ENCODE measurements at regions of chr12 and their contacts with region 1.

Region 1: GRCh38 chr12:12503384-12504078 is 59.1 kb downstream of the DUSP16 start:
- DNase-seq: peak; percentile 52
- ATAC-seq: peak; percentile 75
- H3K4me3 Mint-ChIP-seq: no peak overlapping the region
- H3K27ac Mint-ChIP-seq: peak overlapping the region; percentile 90; the same call in 1 of the 2 replicates
- H3K4me1 Mint-ChIP-seq: peaks cover 76% of the 10 kb centered on the region
- H3K27me3 Mint-ChIP-seq: no peaks in the 10 kb centered on the region
- CTCF ChIP-seq: no peak

Region 2: DNA sequence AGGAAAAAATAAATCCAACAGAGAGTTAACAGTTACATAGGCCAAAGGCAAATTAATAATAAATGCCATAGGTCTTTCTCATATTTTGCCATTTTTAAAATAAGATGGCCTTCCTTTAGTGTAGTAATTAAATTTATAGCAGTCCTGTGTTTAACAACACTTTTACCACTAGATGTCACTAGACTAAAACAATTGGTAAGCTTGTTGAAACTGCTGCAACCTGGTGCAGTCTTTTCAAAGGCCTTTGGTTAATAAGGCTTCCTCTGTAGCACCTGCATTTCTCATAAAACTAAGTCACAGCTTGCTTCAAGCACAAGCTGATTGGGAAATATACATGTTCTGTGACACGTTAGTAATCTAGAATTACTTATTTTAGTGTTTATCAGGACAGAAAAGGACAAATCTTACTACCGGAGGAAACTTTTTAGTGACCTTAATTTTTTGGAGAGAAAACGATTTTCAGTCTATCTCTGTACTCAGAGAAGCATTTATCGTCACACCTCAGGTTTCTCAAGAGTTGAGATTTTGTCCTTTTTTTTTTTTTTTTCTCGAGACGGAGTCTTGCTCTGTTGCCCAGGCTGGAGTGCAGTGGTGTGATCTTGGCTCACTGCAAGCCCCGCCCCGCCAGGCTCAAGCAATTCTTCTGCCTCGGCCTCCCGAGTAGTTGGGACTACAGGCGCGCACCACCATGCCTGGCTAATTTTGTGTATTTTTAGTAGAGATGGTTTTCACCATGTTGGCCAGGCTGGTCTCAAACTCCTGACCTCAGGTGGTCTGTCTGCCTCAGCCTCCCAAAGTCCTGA is 126.7 kb before region 1 on chr12:
- CTCF ChIA-PET with region 1: interaction called, 11 read pairs
- POLR2A ChIA-PET with region 1: no interaction called
- DNase-seq: no peak
- ATAC-seq: peak; percentile 79
- H3K4me3 Mint-ChIP-seq: no peak overlapping the region
- H3K27ac Mint-ChIP-seq: no peak overlapping the region
- H3K4me1 Mint-ChIP-seq: peaks cover 9% of the 10 kb centered on the region
- H3K27me3 Mint-ChIP-seq: no peaks in the 10 kb centered on the region
- CTCF ChIP-seq: peak; percentile 45

Region 3: DNA sequence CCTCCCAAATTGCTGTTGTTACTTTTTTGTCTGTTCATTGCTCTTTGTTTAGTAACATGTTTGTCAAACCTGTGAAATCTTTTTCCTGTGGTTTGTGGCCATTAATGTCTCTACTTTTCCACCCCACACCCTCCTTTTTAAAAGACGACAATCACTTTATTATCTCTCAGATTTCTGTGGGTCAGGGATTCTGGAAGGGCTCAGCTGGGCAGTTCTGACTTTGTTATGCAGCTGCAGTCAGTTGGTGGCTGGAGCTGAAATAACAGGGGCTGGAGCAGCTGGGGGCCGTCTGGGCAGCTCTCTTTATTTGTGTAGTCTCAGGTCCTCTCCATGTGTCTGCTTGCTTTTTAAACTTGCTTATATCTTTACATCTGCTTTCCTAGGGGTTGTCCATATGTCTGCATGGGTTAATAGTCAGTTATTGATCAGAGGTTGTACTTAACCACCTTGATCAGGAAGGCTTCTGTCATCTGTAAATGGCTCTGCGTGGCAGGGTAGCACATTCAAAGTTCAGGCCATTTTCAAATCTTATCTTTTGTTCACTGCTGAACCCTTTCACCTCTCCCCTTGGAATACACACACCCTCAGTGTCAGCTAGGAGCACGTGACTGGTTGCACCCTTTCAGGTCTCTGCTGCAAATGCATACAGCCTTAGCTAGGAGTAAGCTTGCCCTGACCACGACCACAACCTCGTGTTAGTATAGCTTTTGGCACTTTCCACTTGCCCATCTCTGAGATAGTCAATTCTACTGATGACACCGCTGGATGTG is 118.8 kb before region 1 on chr12:
- CTCF ChIA-PET with region 1: interaction called, 16 read pairs
- POLR2A ChIA-PET with region 1: interaction called, 7 read pairs
- DNase-seq: peak; percentile 38
- ATAC-seq: peak; percentile 92
- H3K4me3 Mint-ChIP-seq: peak overlapping the region; percentile 28
- H3K27ac Mint-ChIP-seq: peak overlapping the region; percentile 97
- H3K4me1 Mint-ChIP-seq: peaks cover 52% of the 10 kb centered on the region
- H3K27me3 Mint-ChIP-seq: no peaks in the 10 kb centered on the region
- CTCF ChIP-seq: no peak

Region 4: GRCh38 chr12:12456637-12457036 is 46.9 kb before region 1 on chr12:
- CTCF ChIA-PET with region 1: no interaction called
- POLR2A ChIA-PET with region 1: no interaction called
- DNase-seq: no peak
- ATAC-seq: no peak
- H3K4me3 Mint-ChIP-seq: no peak overlapping the region
- H3K27ac Mint-ChIP-seq: no peak overlapping the region
- H3K4me1 Mint-ChIP-seq: peaks cover 19% of the 10 kb centered on the region
- H3K27me3 Mint-ChIP-seq: no peaks in the 10 kb centered on the region
- CTCF ChIP-seq: no peak

Region 5: DNA sequence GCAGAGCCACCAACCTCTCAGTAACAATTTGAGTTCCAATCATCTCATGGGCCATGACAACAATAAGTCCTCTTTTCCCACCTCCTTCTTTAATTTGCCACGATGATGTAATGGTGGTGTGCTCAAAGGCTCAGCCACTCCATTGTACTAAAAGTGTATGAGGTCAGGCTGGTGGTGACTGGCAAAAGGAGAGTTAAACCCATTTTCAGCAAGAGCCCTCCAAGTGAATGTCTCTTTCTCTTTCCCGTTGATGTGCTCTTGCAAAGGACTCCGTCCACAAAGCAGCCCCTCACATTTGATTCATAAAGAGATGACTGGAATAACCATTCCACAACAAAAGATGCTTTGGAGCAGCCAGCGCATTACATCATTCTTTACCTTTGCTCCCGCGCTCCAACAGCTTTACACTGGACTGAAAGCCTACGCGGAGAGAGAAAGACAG is 17.5 kb after region 1 on chr12:
- CTCF ChIA-PET with region 1: interaction called, 11 read pairs
- POLR2A ChIA-PET with region 1: interaction called, 3 read pairs
- DNase-seq: no peak
- ATAC-seq: no peak
- H3K4me3 Mint-ChIP-seq: no peak overlapping the region
- H3K27ac Mint-ChIP-seq: peak overlapping the region; percentile 57
- H3K4me1 Mint-ChIP-seq: peaks cover 45% of the 10 kb centered on the region
- H3K27me3 Mint-ChIP-seq: no peaks in the 10 kb centered on the region
- CTCF ChIP-seq: no peak

Region 6: DNA sequence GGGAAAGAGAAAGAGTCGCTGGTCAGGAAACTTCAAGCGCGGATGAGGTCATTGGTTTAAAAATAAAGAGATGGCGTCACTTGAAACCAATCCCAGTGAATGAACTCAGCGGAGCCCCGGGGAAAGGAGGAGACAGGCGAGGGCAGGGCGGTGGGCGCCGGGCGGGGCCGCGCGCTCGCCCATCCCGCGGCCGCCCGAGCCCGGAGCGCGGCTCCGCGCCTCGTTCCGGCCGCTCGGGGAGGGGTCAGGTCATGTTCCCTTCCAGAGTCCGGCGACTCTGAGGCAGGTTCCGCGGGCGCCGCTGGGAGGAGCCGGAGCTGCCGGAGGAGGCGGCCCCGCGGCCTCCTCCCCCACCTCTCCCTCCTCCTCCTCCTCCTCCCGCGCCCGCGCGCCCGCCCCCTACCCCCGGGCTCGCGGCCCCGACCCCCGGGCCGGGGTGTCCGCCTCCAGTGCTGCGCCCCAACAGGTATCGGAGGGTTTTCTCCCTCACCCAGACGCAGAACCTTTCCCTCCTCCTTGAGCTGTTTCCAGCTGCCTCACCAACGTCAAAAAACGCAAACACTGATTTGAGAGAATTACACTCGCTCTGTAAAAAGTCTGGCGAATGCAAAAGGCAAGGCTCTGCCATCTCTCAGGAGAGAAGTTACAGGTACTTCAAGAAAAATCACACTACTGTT is 59.2 kb after region 1 on chr12 and contains the start of gene DUSP16:
- CTCF ChIA-PET with region 1: interaction called, 11 read pairs
- POLR2A ChIA-PET with region 1: no interaction called
- DNase-seq: peak; percentile 94
- ATAC-seq: peak; percentile 89
- H3K4me3 Mint-ChIP-seq: peak within 1 kb of the TSS; percentile 79
- H3K27ac Mint-ChIP-seq: peak within 1 kb of the TSS; percentile 94
- H3K4me1 Mint-ChIP-seq: peaks cover 36% of the 10 kb centered on the region
- H3K27me3 Mint-ChIP-seq: no peaks in the 10 kb centered on the region
- CTCF ChIP-seq: no peak
- total RNA-seq, gene DUSP16: 51.9 to 52.5 TPM (median 52.4 TPM) in 3 replicates

Measured in WTC11 (cell line).